ENCODE measurements at regions of chr7 and their contacts with region 1.

Region 1: GRCh38 chr7:5450549-5451372 is 27.1 kb upstream of the TNRC18 start:
- DNase-seq: peak; percentile 64 to 82 (median 78)
- H3K4me3 ChIP-seq: no peak overlapping the region
- H3K27ac ChIP-seq: no peak overlapping the region
- H3K4me1 ChIP-seq: peaks cover 5% of the 10 kb centered on the region
- H3K27me3 ChIP-seq: no peaks in the 10 kb centered on the region
- CTCF ChIP-seq: peak; percentile 62 to 81 (median 77)
- EP300 ChIP-seq: no peak
- POLR2A ChIP-seq: no peak

Region 2: DNA sequence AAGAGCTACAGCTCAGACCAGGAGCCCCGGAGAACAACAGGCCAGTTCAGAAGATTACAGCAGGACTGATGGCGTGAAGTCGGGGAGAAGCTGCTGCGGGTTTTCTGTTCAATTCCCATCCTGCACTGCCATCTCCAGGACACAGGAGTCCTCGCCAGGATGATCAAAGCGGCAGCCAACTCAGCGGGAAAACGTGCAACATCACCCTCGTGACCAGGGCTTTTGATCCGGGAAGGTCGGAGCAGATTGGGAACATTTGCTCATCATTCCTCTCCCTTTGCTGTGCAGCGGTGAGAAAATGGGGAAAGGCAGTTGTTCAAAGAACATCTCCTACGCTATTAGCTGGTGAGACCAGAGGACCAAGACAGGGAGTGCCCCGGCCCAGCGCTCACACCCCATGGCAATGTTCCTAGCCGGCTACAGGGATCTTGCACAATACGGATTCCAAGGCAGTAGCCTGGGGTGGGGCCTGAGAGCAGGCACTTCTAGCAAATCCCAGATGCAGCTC is 819.0 kb before region 1 on chr7:
- intact Hi-C with region 1: no loop called
- DNase-seq: peak; percentile 81 to 88 (median 84)
- H3K4me3 ChIP-seq: peak overlapping the region; percentile 16
- H3K27ac ChIP-seq: peak overlapping the region in 1 of 2 donors; percentile 28
- H3K4me1 ChIP-seq: no peaks in the 10 kb centered on the region
- H3K27me3 ChIP-seq: no peaks in the 10 kb centered on the region
- CTCF ChIP-seq: peak; percentile 43 to 77 (median 71)
- EP300 ChIP-seq: peak; percentile 62
- POLR2A ChIP-seq: no peak

Region 3: GRCh38 chr7:5231811-5232484 is 218.8 kb before region 1 on chr7:
- intact Hi-C with region 1: loop called in 2 of 4 experiments (anchors 10 kb)
- DNase-seq: no peak
- H3K4me3 ChIP-seq: no peak overlapping the region
- H3K27ac ChIP-seq: no peak overlapping the region
- H3K4me1 ChIP-seq: no peaks in the 10 kb centered on the region
- H3K27me3 ChIP-seq: no peaks in the 10 kb centered on the region
- CTCF ChIP-seq: no peak
- EP300 ChIP-seq: no peak
- POLR2A ChIP-seq: no peak

Region 4: GRCh38 chr7:5243261-5243660 is 207.5 kb before region 1 on chr7:
- intact Hi-C with region 1: loop called (anchors 5 to 10 kb)
- DNase-seq: no peak
- H3K4me3 ChIP-seq: no peak overlapping the region
- H3K27ac ChIP-seq: no peak overlapping the region
- H3K4me1 ChIP-seq: peaks cover 6% of the 10 kb centered on the region
- H3K27me3 ChIP-seq: no peaks in the 10 kb centered on the region
- CTCF ChIP-seq: no peak
- EP300 ChIP-seq: no peak
- POLR2A ChIP-seq: no peak

Region 5: GRCh38 chr7:5248201-5248885 is 202.4 kb before region 1 on chr7:
- intact Hi-C with region 1: loop called in 2 of 4 experiments (anchors 5 to 10 kb)
- DNase-seq: peak; percentile 86 to 92 (median 91)
- H3K4me3 ChIP-seq: no peak overlapping the region
- H3K27ac ChIP-seq: peak overlapping the region in 1 of 2 donors; percentile 86
- H3K4me1 ChIP-seq: no peaks in the 10 kb centered on the region
- H3K27me3 ChIP-seq: no peaks in the 10 kb centered on the region
- CTCF ChIP-seq: no peak
- EP300 ChIP-seq: no peak
- POLR2A ChIP-seq: no peak

Region 6: GRCh38 chr7:5363729-5364128 is 87.0 kb before region 1 on chr7:
- intact Hi-C with region 1: loop called in 3 of 4 experiments (anchors 5 to 10 kb)
- DNase-seq: no peak
- H3K4me3 ChIP-seq: no peak overlapping the region
- H3K27ac ChIP-seq: no peak overlapping the region
- H3K4me1 ChIP-seq: peaks cover 3% of the 10 kb centered on the region
- H3K27me3 ChIP-seq: no peaks in the 10 kb centered on the region
- CTCF ChIP-seq: no peak
- EP300 ChIP-seq: no peak
- POLR2A ChIP-seq: no peak

Measured in ovary (tissue), 10 donors.